ENCODE measurements at regions of chr10 and their contacts with region 1.

Region 1: GRCh38 chr10:58152673-58153263 is 114.9 kb downstream of the IPMK start:
- DNase-seq: peak; percentile 81
- H3K4me3 Mint-ChIP-seq: no peak overlapping the region
- H3K27ac Mint-ChIP-seq: no peak overlapping the region
- H3K4me1 Mint-ChIP-seq: peaks cover 12% of the 10 kb centered on the region
- H3K27me3 Mint-ChIP-seq: no peaks in the 10 kb centered on the region
- CTCF ChIP-seq: peak; percentile 81

Region 2: GRCh38 chr10:57338823-57339558 is 813.8 kb before region 1 on chr10:
- CTCF ChIA-PET with region 1: no interaction called
- intact Hi-C with region 1: loop called (anchors 2 kb)
- DNase-seq: peak; percentile 45
- H3K4me3 Mint-ChIP-seq: no peak overlapping the region
- H3K27ac Mint-ChIP-seq: no peak overlapping the region
- H3K4me1 Mint-ChIP-seq: no peaks in the 10 kb centered on the region
- H3K27me3 Mint-ChIP-seq: no peaks in the 10 kb centered on the region
- CTCF ChIP-seq: peak; percentile 79

Region 3: DNA sequence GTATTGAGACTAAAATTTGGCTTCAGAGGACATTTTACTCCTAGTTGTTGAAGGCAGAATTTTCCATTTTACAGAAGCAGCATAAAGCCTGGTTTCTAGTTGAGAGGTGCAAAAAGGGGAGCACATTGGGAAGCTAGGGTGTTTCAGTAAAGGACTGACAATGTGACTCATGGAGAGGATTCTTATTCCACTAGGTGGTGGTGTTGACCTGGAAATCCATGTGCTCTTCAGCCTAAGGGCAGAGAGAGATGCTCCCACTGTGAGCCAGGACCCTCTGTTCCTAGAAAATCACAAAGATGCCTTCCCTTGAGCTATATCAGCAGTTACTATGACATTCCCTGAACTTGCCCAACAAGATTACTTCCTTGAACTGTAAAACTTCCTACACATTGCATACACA is 572.8 kb before region 1 on chr10:
- CTCF ChIA-PET with region 1: no interaction called
- intact Hi-C with region 1: loop called (anchors 2 kb)
- DNase-seq: peak; percentile 51
- H3K4me3 Mint-ChIP-seq: no peak overlapping the region
- H3K27ac Mint-ChIP-seq: peak overlapping the region; percentile 42
- H3K4me1 Mint-ChIP-seq: no peaks in the 10 kb centered on the region
- H3K27me3 Mint-ChIP-seq: no peaks in the 10 kb centered on the region
- CTCF ChIP-seq: peak; percentile 62

Region 4: GRCh38 chr10:57696641-57697040 is 456.1 kb before region 1 on chr10:
- CTCF ChIA-PET with region 1: no interaction called
- intact Hi-C with region 1: loop called (anchors 5 kb)
- DNase-seq: peak; percentile 13
- H3K4me3 Mint-ChIP-seq: peak overlapping the region; percentile 46
- H3K27ac Mint-ChIP-seq: peak overlapping the region; percentile 98
- H3K4me1 Mint-ChIP-seq: peaks cover 87% of the 10 kb centered on the region
- H3K27me3 Mint-ChIP-seq: no peaks in the 10 kb centered on the region
- CTCF ChIP-seq: no peak

Region 5: DNA sequence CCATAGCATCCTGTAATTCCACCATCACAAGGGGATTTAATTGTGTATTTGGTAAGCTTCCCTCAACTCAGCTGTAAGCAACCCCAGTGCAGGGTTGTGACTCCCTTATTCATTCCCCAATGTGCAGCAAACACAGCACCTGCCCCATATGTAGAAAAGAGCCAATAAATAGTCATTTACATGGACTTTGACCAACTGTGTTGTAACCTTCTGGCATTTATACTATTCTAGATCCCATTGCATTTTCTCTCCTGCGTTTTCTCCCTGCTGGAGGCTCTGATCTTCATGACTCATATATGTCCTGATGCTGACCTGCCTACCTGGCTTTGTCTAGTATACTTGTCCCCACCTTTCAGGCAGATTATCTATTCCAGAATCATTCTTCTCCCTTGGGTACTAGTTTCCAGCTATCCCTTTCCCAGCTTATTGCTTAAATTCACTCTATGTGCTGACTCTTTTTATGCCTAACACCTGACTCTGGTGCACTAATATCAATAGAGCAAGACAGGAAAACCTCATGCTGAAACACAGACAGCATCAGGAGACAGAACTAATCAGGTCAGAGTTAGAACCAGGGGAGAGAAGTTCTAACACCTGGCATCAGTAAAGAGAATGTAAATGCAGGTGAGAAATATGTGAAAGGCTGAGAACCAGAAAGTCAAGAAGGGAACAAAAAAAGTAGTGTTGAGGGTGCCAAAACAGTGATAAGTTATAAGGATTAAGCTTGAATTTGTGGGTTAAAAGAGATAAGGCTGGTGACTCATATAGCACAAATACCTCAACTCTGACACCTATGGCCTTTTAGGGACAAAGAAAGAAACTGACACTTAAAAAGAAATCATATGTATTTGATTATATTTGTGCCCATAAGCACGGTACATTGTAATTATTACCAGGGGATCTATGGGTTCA is 287.7 kb before region 1 on chr10:
- CTCF ChIA-PET with region 1: interaction called, 3 read pairs
- intact Hi-C with region 1: loop called (anchors 5 kb)
- DNase-seq: peak; percentile 48
- H3K4me3 Mint-ChIP-seq: peak overlapping the region; percentile 21
- H3K27ac Mint-ChIP-seq: peak overlapping the region; percentile 81
- H3K4me1 Mint-ChIP-seq: peaks cover 64% of the 10 kb centered on the region
- H3K27me3 Mint-ChIP-seq: no peaks in the 10 kb centered on the region
- CTCF ChIP-seq: no peak

Region 6: DNA sequence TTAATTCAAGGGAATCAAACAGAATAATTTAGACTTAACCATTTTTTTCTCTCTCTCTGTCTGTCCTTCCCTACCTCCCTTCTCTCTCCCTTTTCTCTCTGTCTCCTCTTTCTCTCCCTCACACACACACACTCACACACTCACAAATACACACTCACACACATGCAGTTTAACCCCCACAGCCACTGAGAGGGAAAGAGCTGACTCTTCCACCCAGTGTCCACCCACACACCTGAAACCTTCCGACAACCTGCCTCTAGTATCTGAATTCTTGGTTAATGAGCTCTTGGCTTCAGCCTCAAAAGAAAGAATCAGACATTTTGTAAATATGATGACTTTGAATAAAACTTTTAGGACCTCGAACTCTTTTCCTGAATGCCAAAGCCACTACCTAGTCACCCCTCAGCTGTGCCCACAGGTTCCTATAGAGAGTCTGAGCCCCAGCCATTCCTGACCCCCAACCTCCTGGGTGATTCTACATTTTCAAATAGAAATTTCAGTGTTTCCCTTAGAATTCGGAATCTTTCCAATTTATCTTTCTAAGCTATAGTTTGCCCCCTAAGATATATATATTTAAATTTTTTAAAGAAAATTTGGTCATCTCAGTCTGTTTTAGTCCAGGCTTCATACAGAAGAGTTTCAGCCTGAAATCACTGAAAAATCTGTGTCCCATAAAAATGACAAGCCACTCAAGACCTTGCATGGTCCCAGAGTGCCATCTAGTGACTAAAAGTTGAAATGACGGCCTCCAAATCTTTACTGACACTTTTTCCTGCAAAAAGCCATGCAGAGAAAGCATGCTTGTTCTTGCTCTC is 87.8 kb before region 1 on chr10:
- CTCF ChIA-PET with region 1: interaction called, 10 read pairs
- intact Hi-C with region 1: loop called (anchors 5 kb)
- DNase-seq: peak; percentile 61
- H3K4me3 Mint-ChIP-seq: peak overlapping the region; percentile 1
- H3K27ac Mint-ChIP-seq: peak overlapping the region; percentile 15
- H3K4me1 Mint-ChIP-seq: peaks cover 26% of the 10 kb centered on the region
- H3K27me3 Mint-ChIP-seq: no peaks in the 10 kb centered on the region
- CTCF ChIP-seq: peak; percentile 87

Region 7: DNA sequence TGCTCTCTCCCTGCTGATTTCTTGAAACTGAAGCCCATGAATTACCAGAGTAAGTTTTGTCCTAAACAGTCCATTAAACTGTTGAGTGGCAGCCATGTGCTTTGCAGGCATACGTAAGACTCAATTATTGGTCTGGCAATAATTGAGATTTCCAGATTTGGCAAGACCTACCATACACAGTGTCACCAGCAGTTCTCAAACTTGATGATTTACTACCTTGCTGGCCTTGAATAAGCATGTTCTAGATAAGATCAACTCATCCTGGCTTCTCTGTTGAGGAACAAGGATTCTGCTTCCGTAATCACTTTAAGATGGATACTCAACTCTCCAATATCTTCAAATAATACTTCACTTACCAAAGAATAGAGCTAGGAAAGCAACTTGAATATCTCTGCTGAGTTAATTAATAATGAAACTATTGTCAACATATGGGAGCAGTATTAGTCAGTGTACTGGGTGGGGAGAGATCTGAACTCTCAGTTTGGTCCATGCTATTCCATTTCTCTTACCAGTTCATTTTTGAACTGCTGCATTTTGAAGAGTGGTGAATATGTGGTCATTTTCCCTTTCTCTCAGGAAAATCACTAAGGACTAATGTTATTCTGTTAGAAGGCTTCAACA is 66.5 kb before region 1 on chr10:
- CTCF ChIA-PET with region 1: interaction called, 5 read pairs
- intact Hi-C with region 1: loop called (anchors 5 kb)
- DNase-seq: no peak
- H3K4me3 Mint-ChIP-seq: no peak overlapping the region
- H3K27ac Mint-ChIP-seq: no peak overlapping the region
- H3K4me1 Mint-ChIP-seq: peaks cover 22% of the 10 kb centered on the region
- H3K27me3 Mint-ChIP-seq: no peaks in the 10 kb centered on the region
- CTCF ChIP-seq: no peak